PC-3 (cell line): ENCODE measurements at regions of chr1 and their contacts with region 1.

Region 1: DNA sequence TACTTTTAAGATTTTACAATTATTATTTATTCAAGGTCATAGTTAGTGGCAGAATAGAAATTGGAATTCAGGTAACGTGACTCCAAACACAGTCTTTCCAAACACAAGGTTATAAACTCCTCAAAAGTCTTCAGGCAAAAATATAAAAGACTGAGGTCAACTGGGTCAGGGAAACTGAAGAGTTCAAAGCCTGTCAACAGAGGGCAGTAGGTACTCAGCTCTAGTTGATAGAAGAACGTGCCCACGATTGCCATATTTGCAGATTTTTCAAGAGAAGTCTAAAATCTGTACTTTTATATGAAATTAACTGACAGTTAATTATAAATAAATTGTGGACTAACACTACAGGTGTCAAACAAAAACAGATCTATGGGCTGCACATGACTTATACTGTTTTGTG is 135.0 kb downstream of the LHX4 start:
- DNase-seq: peak; percentile 21
- ATAC-seq: no peak
- H3K4me3 ChIP-seq: no peak overlapping the region
- H3K27ac ChIP-seq: no peak overlapping the region
- H3K4me1 ChIP-seq: peaks cover 18% of the 10 kb centered on the region
- H3K27me3 ChIP-seq: no peaks in the 10 kb centered on the region
- CTCF ChIP-seq: peak; percentile 54

Region 2: DNA sequence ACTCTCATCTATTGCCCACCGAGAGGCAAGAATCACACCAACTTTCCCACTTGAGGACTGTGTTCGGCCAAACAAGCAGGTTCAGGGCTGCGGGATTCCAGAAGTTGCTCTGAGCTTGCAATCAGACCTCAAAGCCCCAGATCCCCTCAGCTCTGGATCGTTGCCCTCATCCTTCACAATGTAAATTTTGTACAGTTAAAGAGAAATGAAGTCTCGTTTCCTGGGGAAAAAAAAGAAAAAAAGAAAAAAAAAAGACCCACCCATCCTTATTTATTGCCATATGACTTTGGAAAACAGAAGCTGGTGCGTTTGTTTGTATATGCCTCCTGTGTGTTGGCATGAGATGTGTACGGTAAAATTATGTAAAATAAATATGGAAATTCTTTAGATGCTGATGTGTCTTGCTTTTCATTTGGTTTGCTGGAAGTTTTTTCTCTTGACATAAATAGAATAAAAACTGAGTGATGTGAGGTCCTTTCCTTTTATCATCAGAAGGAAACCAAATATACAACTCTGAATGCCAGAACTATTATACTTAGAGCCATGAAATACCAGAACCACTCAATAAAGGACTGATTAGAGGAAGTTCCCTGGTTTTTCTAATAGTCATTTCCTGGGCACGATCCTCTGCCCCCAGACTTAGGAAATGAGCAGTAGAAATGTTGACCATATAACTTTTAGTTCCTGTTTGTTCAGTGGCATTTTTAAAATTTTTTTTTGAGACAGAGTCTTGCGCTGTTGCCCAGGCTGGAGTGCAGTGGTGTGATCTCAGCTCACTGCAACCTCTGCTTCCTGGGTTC is 86.2 kb before region 1 on chr1:
- CTCF ChIA-PET with region 1: no interaction called
- POLR2A ChIA-PET with region 1: no interaction called
- intact Hi-C with region 1: loop called (anchors 5 kb)
- DNase-seq: peak; percentile 23
- ATAC-seq: peak; percentile 86
- H3K4me3 ChIP-seq: no peak overlapping the region
- H3K27ac ChIP-seq: peak overlapping the region; percentile 43
- H3K4me1 ChIP-seq: no peaks in the 10 kb centered on the region
- H3K27me3 ChIP-seq: no peaks in the 10 kb centered on the region
- CTCF ChIP-seq: no peak

Region 3: GRCh38 chr1:180533266-180533987 is 168.4 kb after region 1 on chr1:
- CTCF ChIA-PET with region 1: no interaction called
- POLR2A ChIA-PET with region 1: no interaction called
- intact Hi-C with region 1: no loop called
- DNase-seq: peak; percentile 67
- ATAC-seq: peak; percentile 56
- H3K4me3 ChIP-seq: no peak overlapping the region
- H3K27ac ChIP-seq: no peak overlapping the region
- H3K4me1 ChIP-seq: peaks cover 7% of the 10 kb centered on the region; the same call in 1 of the 2 replicates
- H3K27me3 ChIP-seq: no peaks in the 10 kb centered on the region
- CTCF ChIP-seq: peak; percentile 83